Activated naive CD4-positive, alpha-beta T cell treated with anti-CD3 and anti-CD28 coated beads, Interleukin-2, amount 10 ng/mL, durations not matched to agents 7 days and 5 days (primary cell): ENCODE measurements at regions of chr5 and their contacts with region 1.

Region 1: DNA sequence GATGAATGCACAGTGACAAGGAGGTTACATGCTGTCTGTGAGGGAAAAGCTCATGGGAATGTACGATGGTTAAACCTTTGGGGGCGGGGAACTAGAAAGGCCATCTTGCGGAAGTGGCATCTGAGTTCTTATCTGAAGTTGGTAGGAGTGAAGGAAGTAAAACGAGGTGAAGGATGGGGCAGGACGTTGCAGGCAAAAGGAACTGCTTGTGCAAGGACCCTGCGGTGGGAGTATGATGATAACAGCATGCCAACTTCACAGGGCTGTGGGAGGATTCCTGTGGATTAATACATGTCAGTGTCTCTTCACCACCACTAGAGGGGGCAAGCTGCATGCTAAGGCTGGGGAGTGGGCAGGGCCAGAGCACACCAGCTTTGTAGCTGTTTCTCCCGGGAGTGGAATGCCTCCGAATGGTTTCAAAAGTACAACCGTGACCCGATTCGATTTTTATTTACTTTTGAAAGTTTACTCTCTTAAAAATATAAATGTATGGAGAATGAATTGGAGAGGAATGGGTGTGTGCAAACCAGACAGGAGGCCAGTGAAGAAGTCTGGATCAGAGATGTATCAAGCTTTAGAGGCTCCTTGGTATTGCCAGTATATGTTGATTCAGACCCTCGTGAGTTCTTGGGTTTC is 62.5 kb downstream of the CYFIP2 start:
- DNase-seq: peak; percentile 65
- H3K4me3 Mint-ChIP-seq: peak overlapping the region; percentile 0
- H3K27ac Mint-ChIP-seq: peak overlapping the region; percentile 83
- H3K4me1 Mint-ChIP-seq: peaks cover 39% of the 10 kb centered on the region
- H3K27me3 Mint-ChIP-seq: no peaks in the 10 kb centered on the region

Region 2: DNA sequence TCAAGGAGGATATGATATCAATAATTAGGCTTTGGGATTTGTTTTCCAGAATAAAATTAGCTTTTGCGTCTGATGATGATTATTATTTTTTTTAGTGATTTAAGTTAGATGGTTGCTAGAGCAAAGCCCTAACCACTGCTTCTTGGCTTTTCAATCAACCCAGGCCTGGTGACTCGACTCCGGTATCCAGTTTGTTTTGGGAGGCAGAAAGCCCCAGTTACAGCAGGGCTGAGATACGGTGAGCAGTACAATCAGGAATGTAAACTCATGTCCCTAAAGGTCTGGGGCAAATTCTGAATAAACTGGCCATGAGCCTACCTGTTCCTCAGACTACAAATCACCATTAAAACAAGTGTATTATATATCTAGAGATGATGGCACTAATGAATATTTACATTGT is 86.9 kb before region 1 on chr5:
- CTCF ChIA-PET with region 1: no interaction called
- DNase-seq: no peak
- H3K4me3 Mint-ChIP-seq: no peak overlapping the region
- H3K27ac Mint-ChIP-seq: peak overlapping the region; percentile 37
- H3K4me1 Mint-ChIP-seq: peaks cover 71% of the 10 kb centered on the region
- H3K27me3 Mint-ChIP-seq: no peaks in the 10 kb centered on the region

Region 3: GRCh38 chr5:157303667-157304327 is 24.6 kb before region 1 on chr5:
- CTCF ChIA-PET with region 1: interaction called, 10 read pairs
- DNase-seq: peak; percentile 80
- H3K4me3 Mint-ChIP-seq: peak overlapping the region; percentile 75
- H3K27ac Mint-ChIP-seq: peak overlapping the region; percentile 99
- H3K4me1 Mint-ChIP-seq: peaks cover 76% of the 10 kb centered on the region
- H3K27me3 Mint-ChIP-seq: no peaks in the 10 kb centered on the region

Region 4: GRCh38 chr5:157312492-157312891 is 15.9 kb before region 1 on chr5:
- CTCF ChIA-PET with region 1: interaction called, 76 read pairs
- DNase-seq: peak; percentile 71
- H3K4me3 Mint-ChIP-seq: peak overlapping the region; percentile 2
- H3K27ac Mint-ChIP-seq: peak overlapping the region; percentile 19
- H3K4me1 Mint-ChIP-seq: peaks cover 39% of the 10 kb centered on the region
- H3K27me3 Mint-ChIP-seq: no peaks in the 10 kb centered on the region

Region 5: GRCh38 chr5:157342822-157343402 is 14.5 kb after region 1 on chr5:
- CTCF ChIA-PET with region 1: interaction called, 40 read pairs
- DNase-seq: peak; percentile 48
- H3K4me3 Mint-ChIP-seq: no peak overlapping the region
- H3K27ac Mint-ChIP-seq: no peak overlapping the region
- H3K4me1 Mint-ChIP-seq: peaks cover 8% of the 10 kb centered on the region
- H3K27me3 Mint-ChIP-seq: no peaks in the 10 kb centered on the region

Region 6: DNA sequence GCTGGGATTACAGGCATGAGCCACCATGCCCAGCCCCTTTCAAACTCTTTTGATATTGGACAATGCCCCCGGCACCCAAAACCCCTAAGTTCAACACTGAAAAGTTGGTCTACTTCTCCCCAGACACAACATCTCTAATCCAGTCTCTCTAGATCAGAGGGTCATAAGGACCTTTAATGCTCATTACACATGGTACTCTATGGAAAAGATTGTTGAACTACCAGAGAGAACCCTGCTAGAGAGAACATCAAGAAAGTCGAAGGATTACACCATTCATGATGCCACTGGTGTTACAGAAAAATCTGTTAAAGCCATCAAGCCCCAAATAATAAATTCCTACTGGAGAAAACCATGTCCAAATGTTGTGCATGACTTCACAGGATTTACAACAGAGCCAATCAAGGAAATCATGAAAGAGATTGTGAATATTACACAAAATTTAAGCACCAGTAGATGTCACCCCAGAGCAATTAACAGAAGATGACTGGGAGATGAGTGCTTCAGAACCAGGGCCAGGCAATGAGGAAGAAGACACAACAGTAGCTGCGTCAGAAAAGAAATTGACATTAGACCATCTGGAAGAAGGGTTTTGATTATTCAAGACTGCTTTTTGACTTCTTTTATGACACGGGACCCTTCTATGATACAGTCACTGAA is 103.3 kb after region 1 on chr5:
- CTCF ChIA-PET with region 1: interaction called, 10 read pairs
- DNase-seq: peak; percentile 38
- H3K4me3 Mint-ChIP-seq: no peak overlapping the region
- H3K27ac Mint-ChIP-seq: no peak overlapping the region
- H3K4me1 Mint-ChIP-seq: peaks cover 9% of the 10 kb centered on the region
- H3K27me3 Mint-ChIP-seq: peaks cover 40% of the 10 kb centered on the region

Region 7: DNA sequence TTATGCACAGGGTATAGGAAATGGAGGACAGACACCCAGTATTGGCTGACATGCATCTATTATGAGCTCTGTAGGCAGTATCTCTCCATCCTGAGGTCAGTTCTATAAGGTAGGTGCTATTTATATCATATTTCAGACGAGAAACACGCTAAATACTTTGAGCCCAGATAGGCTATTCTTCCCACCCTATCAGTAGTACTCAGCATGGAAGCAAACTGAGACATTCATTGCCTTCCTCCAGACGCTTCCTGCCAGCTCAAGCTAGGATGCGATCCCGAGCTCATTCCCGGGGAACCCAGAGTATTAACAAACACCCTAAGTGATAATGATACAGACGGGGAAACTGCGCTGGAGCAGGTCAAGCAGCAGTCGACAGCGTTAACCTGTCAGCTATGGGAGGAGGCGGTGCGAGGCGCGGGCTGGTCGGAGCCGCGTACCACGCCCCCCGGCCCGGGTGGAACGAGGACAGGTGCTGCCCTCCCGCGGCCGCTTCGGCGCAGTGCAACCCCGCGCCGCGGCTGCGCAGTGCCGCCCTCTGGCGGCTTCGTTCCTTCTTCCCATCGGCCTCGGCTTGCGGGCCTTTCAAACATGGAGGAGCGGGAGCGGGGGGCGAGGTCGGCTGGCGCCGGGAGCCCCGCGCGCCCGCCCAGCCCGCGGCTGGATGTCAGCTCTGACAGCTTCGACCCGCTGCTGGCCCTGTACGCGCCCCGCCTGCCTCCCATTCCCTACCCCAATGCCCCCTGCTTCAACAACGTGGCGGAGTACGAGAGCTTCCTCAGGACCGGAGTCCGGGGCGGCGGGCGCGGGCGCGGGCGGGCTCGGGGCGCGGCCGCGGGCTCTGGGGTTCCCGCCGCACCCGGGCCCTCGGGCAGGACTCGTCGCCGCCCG is 415.0 kb after region 1 on chr5 and contains the start of gene LSM11:
- CTCF ChIA-PET with region 1: interaction called, 30 read pairs
- DNase-seq: peak; percentile 91
- H3K4me3 Mint-ChIP-seq: peak within 1 kb of the TSS; percentile 85
- H3K27ac Mint-ChIP-seq: peak within 1 kb of the TSS; percentile 78
- H3K4me1 Mint-ChIP-seq: peaks cover 36% of the 10 kb centered on the region
- H3K27me3 Mint-ChIP-seq: no peaks in the 10 kb centered on the region